GM13977 (cell line): ENCODE measurements at regions of chr4 and their contacts with region 1.

Region 1: DNA sequence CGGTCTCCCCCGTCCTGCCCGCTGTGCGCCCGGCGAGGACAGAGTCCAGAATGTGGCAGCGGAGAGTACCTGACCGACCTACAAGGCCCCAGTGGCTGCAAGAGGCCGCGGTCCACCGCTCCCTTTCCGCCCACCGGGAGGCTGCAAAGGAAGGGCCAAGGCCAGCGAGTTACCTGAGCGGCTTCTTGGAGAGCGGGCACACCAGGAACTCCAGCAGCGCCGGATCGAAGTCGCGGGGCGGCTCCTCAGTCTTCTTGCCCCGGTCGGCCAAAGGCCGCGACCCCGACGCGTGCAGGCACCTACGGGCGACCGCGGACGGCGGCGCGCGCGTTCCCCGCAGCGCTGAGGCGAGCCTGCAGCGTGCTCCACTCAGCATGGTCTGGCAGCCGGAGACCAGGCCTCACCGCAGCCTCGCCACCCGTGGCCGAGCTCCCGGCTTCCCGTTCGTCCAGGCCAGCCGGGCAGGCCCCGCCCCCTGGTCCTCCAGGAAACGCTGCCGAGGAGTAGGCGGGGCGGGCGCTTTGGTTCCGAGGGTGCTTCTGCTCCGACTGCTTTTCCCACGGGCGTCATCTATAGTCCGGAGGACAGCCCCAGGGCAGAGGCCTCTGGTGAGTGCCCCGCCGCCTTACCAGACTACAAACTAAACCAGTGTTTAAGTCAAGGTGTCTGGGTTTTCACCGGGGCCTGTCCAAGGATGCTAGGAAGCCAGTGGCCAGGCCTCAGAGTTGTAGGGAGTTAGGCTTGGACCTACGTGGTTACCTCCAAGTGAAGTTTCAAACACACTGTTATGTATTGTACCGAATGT is at the start of gene PYURF:
- DNase-seq: peak; percentile 86
- CTCF ChIP-seq: no peak

Region 2: DNA sequence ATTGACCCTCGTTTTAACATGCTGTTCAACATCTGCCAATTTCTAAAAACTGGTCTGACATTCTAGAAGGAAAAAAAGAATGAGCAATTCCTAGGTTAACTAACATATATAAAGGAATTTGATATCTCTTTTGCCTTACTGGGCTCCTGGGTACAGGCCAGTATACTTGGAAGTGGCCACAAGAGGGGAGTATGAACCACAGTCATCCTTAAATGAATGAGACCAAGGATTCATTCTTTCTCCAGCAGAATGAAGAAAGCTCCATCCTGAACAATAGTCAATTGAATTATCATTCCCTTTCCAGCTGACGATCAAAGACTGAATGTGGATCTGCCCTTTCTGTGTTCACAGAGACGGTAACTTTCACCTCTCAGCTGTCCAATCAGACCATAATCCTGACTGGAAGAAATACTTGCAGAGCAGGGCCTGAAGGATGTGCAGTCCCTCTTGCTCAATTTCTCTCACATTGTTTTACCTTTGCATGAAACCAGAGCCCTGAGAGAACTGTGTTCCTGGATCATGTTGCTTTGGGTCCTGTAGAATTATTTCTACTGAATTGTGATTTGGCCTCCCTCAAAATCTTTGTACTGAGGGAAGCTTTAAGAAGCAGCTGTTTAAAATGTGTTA is 979.6 kb before region 1 on chr4:
- in situ Hi-C with region 1: no loop called
- DNase-seq: no peak
- CTCF ChIP-seq: no peak

Region 3: GRCh38 chr4:88033309-88033708 is 490.2 kb before region 1 on chr4:
- in situ Hi-C with region 1: loop called (anchors 25 kb)
- DNase-seq: peak; percentile 38
- CTCF ChIP-seq: peak; percentile 70

Region 4: GRCh38 chr4:88591787-88592599 is 68.5 kb after region 1 on chr4 and contains the start of gene HERC3:
- in situ Hi-C with region 1: no loop called
- DNase-seq: peak; percentile 95
- CTCF ChIP-seq: no peak

Region 5: GRCh38 chr4:88823058-88823919 is 299.8 kb after region 1 on chr4:
- in situ Hi-C with region 1: loop called (anchors 25 kb)
- DNase-seq: peak; percentile 19
- CTCF ChIP-seq: no peak

Region 6: GRCh38 chr4:88858752-88859151 is 335.2 kb after region 1 on chr4:
- in situ Hi-C with region 1: no loop called
- DNase-seq: peak; percentile 44
- CTCF ChIP-seq: no peak

Region 7: DNA sequence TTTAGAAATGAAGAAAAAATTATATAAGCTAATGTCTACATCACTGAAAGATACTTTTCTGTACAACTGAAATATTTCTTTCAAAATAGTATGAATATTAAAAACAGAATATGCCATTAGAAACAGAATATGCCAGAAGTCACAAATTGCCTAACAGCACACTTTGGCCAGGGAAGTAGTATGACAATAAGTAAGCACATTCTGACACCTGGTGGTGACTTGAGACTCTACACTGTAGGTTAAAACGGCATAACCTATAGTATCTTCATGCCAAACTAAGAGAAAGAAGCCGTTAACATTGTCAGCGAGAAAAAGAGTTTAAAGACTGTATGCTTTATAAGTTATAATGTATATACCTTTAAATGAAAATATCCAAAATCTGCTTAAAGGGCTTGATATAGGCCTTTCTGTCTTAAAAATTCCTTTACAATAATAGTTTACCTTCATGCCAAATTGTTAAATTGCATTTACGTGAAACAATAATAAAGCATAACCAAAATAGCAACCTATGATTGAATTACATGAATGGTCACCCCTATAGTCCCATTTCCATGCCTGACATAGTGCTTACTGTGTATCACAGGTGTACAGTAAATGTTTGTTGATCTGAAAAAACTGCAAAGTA is 500.6 kb after region 1 on chr4:
- in situ Hi-C with region 1: loop called (anchors 25 kb)
- DNase-seq: peak; percentile 50
- CTCF ChIP-seq: peak; percentile 70